ENCODE measurements at regions of chr2 and their contacts with region 1.

Region 1: DNA sequence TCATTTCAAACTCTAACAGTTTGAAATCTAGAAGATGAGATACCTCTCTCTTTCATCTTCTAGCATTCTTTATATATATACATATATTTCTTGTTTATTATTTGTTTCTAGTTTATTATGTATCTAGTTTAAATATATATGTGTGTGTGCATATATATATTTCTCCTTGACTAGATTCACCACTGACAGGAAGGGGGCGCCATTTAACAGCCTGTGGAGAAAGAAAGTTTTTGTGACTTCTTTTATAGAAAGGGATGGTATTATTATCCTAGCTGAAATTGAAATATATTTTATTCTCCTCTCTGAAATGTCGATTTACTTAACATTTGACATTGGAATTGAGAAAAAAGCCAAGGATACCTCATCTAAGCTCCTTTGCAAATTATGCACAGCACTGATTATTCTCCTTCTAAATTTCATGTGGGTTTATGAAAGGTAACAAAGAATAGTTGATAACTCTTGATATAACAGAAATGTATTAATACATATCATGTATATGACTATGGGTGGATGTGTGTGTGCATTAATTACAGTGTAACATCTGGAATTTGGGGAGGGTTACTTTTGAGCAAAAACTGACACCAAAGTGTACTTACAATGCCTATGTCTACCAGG is 160.7 kb upstream of the NT5C1B start:
- DNase-seq: peak; percentile 49
- H3K4me3 ChIP-seq: no peak overlapping the region
- H3K27ac ChIP-seq: no peak overlapping the region
- H3K4me1 ChIP-seq: peaks cover 0 to 15% (median 5%) of the 10 kb centered on the region in 4 donors
- H3K27me3 ChIP-seq: no peaks in the 10 kb centered on the region
- CTCF ChIP-seq: peak; percentile 69 to 82 (median 74)
- EP300 ChIP-seq: no peak
- POLR2A ChIP-seq: no peak

Region 2: GRCh38 chr2:18398833-18399232 is 351.2 kb before region 1 on chr2:
- in situ Hi-C with region 1: no loop called
- intact Hi-C with region 1: no loop called
- DNase-seq: no peak
- H3K4me3 ChIP-seq: no peak overlapping the region
- H3K27ac ChIP-seq: no peak overlapping the region
- H3K4me1 ChIP-seq: no peaks in the 10 kb centered on the region
- H3K27me3 ChIP-seq: no peaks in the 10 kb centered on the region
- CTCF ChIP-seq: no peak
- EP300 ChIP-seq: no peak
- POLR2A ChIP-seq: no peak

Region 3: DNA sequence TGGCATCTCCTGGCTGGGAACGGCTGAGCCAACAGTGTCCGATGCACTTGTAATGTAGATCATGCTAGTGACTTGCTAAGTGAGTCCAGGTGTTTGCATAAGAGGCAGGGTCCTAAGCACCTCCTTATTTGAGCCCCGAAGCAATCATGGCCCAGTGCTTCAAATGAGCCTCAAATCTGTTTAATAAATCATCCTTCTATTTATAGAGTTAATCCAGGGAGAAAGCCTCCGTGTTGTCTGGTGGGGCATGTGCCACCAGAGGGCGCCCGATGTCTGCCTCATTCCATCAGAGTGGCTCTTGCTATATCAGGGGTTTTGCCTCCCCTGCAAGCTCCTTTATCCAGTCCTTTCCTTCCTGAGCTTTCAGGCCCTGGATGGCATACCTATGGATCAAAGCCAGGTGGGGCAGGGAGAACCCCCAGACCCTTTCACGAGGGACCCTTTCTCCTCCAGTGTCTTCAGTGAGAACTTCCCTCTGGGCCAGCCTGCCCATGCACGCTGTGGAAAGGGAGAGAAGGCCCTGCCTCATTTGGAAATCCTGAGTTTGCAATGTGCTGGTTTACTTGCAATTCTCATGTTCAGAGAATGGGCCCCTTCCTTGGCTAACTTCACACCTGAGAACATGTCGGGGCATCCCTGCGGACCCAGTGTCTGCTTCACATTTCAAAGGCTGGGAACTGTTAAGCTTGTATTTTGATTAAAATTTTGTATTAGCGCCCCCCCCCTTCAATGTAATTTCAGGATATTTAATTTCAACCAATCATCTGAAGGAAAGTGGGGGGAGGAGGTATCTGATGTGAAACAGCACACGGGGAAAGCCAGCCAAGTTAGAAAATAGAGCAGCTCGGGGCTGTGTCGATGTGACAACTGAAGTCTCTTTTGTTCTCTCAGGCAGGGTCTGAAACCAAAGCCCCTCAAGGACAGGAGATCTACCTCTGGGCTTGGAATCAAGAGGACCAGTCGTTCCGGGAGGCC is 229.3 kb before region 1 on chr2:
- in situ Hi-C with region 1: no loop called
- intact Hi-C with region 1: loop called (anchors 10 kb)
- DNase-seq: peak; percentile 82
- H3K4me3 ChIP-seq: no peak overlapping the region
- H3K27ac ChIP-seq: peak overlapping the region; percentile 42 to 75 (median 56)
- H3K4me1 ChIP-seq: peaks cover 0 to 16% (median 1%) of the 10 kb centered on the region in 4 donors
- H3K27me3 ChIP-seq: no peaks in the 10 kb centered on the region
- CTCF ChIP-seq: peak; percentile 86 to 95 (median 89)
- EP300 ChIP-seq: no peak
- POLR2A ChIP-seq: no peak

Region 4: DNA sequence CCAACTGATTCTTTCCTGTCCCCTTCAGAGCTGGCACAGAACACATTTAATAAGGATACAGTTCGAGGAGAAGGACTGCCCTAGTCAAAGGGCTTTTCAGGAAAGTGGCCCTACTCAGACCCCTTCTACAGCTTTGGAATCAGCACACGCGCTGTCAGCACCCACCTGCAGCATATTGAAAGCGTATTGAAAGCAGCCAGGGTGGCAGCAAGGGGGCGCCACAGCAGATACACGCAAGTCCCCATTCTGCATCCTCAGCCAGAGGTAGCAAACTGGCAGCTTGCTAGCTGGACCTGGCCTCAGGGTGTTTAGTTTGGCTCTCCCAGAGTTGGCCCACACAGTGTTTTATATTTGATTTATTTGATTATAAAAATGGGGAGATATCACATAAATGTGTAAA is 59.7 kb before region 1 on chr2:
- in situ Hi-C with region 1: no loop called
- intact Hi-C with region 1: no loop called
- DNase-seq: no peak
- H3K4me3 ChIP-seq: no peak overlapping the region
- H3K27ac ChIP-seq: no peak overlapping the region
- H3K4me1 ChIP-seq: no peaks in the 10 kb centered on the region
- H3K27me3 ChIP-seq: no peaks in the 10 kb centered on the region
- CTCF ChIP-seq: no peak
- EP300 ChIP-seq: no peak
- POLR2A ChIP-seq: no peak

Measured in transverse colon (tissue), 4 donors.